Brain microvascular endothelial cell (primary cell): ENCODE measurements at regions of chr16 and their contacts with region 1.

Region 1: DNA sequence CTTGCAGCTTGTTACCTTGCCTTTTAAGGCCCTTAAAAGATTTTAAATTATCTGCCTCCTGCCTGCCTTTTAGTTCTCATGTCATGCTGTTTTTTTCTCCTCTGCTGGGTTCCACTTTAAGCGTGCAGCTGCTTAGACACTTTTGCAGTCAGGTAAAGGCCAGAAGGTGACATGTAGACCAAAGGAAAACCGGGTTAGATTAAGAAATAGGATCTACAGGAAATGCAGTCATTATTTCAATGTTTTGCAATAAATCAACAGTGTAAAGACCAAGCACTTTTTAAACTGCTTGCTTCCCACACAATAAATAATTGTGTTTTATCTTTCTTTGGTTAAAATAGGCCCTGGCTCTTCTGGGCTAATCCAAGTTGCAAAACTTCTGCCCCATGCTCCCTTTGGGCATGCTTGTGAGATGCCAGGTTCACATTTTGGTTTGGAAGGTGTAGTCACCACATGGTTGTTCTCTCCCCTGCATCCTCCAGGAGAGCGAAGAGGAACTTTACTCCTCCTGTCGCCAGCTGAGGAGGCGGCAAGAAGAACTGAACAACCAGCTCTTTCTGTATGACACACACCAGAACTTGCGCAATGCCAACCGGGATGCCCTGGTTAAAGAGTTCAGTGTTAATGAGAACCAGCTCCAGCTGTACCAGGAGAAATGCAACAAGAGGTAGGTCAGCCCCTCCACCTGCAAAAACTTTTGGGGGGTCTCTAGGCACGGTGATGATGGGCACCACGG is 54.9 kb downstream of the SDR42E1 start:
- DNase-seq: no peak
- H3K4me3 ChIP-seq: no peak overlapping the region
- H3K27ac ChIP-seq: no peak overlapping the region
- H3K27me3 ChIP-seq: no peaks in the 10 kb centered on the region
- CTCF ChIP-seq: no peak

Region 2: DNA sequence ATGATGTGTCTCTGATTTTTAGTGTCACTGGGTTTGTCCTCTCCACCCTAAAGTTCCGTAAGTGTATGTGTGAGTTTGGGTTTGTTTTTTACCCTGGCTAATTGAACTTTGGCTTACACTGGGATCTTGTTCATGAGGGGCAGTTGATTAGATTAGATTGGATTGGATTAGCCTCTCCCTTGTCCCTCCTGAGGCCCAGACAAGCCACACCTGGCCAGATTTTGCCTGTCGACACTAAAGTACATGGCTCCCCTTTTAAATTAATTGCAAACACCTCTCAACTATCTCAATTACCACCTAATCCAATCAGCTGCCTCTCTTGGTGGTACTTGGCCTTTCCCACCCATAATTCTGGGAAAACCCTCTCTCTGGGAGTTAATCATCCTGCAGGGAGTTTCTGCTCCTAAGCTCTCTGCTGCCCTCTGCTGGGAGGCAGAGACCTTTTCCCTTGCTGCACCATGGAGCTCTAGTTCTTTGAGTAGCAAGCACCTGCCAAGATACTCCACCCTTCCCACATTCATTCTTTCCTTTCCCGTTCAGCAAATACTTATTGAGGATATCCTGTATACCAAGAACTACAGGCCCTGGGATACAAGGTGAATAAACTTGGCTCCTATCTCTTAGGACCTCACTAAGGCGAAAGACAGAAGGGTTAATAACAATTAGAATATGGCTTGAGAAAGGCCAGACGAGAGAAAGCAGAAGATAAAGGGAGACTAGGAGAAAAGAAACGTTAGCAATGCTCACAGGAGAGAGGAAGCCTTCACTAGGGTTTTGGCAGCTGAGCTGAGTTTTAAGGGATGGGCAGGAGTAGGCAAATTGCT is 273.6 kb after region 1 on chr16:
- in situ Hi-C with region 1: loop called (anchors 25 kb)
- DNase-seq: peak; percentile 55
- H3K4me3 ChIP-seq: no peak overlapping the region
- H3K27ac ChIP-seq: no peak overlapping the region
- H3K27me3 ChIP-seq: peaks cover 6% of the 10 kb centered on the region
- CTCF ChIP-seq: peak; percentile 99